ENCODE measurements at regions of chr10 and their contacts with region 1.

Region 1: DNA sequence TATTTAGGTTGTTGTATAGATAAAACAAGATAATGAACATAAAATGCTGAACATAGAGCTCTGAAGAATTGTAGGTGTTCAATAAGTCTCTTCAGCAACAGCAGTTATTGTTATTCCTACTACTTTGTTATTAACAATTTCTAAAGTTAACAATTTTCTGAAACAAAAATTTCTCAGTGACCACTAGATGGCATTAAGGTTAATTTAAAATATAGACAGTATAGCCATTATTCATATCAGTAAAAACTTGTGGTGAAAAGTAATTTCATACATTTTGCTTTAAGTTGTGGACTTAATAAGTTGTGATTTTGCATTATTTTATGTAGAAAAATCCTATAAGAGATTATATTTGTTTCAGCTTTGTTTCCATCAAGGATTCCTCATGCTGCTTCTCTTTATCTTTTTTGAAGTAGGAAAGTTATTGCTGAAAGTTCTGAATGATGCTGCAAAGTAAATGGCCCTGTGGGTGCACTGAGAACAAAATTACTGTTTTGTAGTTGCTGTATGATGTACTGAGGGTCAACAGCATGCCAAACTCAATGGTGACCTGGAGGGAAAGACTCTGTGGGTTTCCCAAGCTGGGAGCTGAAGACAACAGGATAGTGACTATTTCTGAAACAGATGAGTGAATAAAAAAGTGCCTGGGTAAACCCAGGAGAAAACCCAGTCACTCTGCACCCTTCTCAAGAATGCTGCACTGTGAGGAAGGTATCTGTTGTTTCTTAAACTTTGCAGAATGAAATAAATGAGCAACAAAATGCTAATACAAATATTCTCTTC is 253.6 kb downstream of the KIF20B start:
- DNase-seq: no peak
- ATAC-seq: no peak
- H3K4me3 ChIP-seq: no peak overlapping the region
- H3K27ac ChIP-seq: no peak overlapping the region
- H3K4me1 ChIP-seq: no peaks in the 10 kb centered on the region
- H3K27me3 ChIP-seq: no peaks in the 10 kb centered on the region
- CTCF ChIP-seq: peak; percentile 38; the same call in 1 of the 2 replicates
- POLR2A ChIP-seq: no peak
- RAD21 ChIP-seq: no peak

Region 2: DNA sequence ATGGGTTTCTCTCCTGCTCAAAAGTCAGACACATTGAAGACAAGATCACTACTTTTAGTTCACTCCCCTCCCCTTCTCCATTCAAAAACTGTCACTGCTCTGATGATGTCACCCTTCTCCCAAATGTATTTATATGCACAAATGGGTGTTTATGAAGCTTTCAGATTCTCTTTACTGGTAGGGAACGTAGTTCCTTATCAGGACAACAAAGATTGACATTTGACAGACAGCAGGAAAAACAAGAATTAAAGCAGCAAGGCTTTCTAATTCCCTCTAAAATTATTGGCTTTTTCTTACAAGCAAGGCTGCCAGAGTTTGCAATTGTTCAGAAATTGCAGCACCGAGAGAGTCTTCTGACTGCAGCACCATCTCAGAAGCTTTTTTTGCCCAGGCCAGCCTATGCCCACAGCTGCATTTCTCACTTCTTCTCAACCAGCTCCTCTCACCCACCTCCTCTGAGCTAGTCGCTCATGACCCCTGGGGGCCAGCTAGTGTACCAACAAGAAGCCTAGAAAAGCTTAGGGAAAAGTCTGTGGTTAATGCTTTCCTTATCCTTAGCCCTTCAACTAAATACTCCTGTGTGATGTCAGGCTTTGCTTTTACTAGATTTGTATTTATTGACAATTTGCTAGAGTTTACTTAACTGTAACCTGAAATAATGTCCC is 637.8 kb after region 1 on chr10:
- CTCF ChIA-PET with region 1: no interaction called
- POLR2A ChIA-PET with region 1: no interaction called
- dilution Hi-C with region 1: no loop called
- in situ Hi-C with region 1: no loop called
- intact Hi-C with region 1: loop called (anchors 5 kb)
- DNase-seq: peak; percentile 51
- ATAC-seq: peak; percentile 93
- H3K4me3 ChIP-seq: no peak overlapping the region
- H3K27ac ChIP-seq: no peak overlapping the region
- H3K4me1 ChIP-seq: no peaks in the 10 kb centered on the region
- H3K27me3 ChIP-seq: peaks cover 10% of the 10 kb centered on the region
- CTCF ChIP-seq: peak; percentile 64
- POLR2A ChIP-seq: no peak
- RAD21 ChIP-seq: peak; percentile 80

Region 3: DNA sequence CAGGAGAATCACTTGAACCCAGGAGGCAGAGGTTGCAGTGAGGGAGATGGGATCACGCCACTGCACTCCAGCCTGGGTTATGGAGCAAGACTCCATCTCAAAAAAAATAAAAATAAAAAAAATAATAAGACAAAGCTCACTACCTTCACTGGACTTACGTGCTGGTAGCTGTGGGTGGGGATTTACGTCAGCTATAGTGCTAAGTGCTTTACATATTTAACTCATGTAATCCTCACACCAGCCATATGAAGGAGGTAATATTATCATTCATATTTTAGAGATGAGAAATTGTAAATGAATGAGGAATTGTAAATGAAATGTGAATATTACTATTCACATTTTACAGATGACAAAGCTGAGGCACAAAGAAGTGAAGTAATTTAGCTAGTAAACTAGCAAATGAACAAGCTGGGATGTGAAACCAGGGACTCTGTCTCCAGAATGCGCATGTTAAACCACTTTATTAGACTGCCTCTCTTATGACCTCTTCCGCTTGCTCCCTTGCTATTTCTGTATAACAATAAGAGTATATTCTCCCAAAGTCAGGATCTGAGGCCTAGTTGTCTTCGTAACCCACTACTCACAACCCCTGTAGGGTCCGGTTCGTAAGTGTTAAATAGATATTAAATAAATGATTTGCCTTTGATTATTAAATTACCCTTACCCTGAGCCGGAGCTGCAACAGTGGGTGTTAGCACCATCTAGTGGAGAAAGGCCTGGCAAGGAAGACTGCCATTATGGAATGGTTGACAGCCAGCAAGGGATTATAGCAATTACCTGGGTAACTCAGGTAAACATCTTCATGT is 832.6 kb after region 1 on chr10:
- CTCF ChIA-PET with region 1: no interaction called
- POLR2A ChIA-PET with region 1: no interaction called
- dilution Hi-C with region 1: no loop called
- in situ Hi-C with region 1: no loop called
- intact Hi-C with region 1: loop called (anchors 10 kb)
- DNase-seq: peak; percentile 30
- ATAC-seq: peak; percentile 72
- H3K4me3 ChIP-seq: no peak overlapping the region
- H3K27ac ChIP-seq: no peak overlapping the region
- H3K4me1 ChIP-seq: no peaks in the 10 kb centered on the region
- H3K27me3 ChIP-seq: peaks cover 4% of the 10 kb centered on the region
- CTCF ChIP-seq: peak; percentile 71
- POLR2A ChIP-seq: no peak
- RAD21 ChIP-seq: peak; percentile 67

Region 4: GRCh38 chr10:90862908-90863514 is 908.0 kb after region 1 on chr10:
- CTCF ChIA-PET with region 1: no interaction called
- POLR2A ChIA-PET with region 1: no interaction called
- dilution Hi-C with region 1: no loop called
- in situ Hi-C with region 1: no loop called
- intact Hi-C with region 1: loop called (anchors 5 kb)
- DNase-seq: peak; percentile 47
- ATAC-seq: peak; percentile 30; the same call in 1 of the 2 replicates
- H3K4me3 ChIP-seq: no peak overlapping the region
- H3K27ac ChIP-seq: no peak overlapping the region
- H3K4me1 ChIP-seq: no peaks in the 10 kb centered on the region
- H3K27me3 ChIP-seq: peaks cover 21% of the 10 kb centered on the region
- CTCF ChIP-seq: peak; percentile 89
- POLR2A ChIP-seq: no peak
- RAD21 ChIP-seq: peak; percentile 83

Region 5: GRCh38 chr10:91051829-91052228 is 1096.9 kb after region 1 on chr10:
- CTCF ChIA-PET with region 1: no interaction called
- POLR2A ChIA-PET with region 1: no interaction called
- dilution Hi-C with region 1: no loop called
- in situ Hi-C with region 1: no loop called
- intact Hi-C with region 1: no loop called
- DNase-seq: no peak
- ATAC-seq: no peak
- H3K4me3 ChIP-seq: no peak overlapping the region
- H3K27ac ChIP-seq: no peak overlapping the region
- H3K4me1 ChIP-seq: no peaks in the 10 kb centered on the region
- H3K27me3 ChIP-seq: peaks cover 2% of the 10 kb centered on the region
- CTCF ChIP-seq: no peak
- POLR2A ChIP-seq: no peak
- RAD21 ChIP-seq: no peak

Measured in IMR-90 (cell line).